Astrocyte of the cerebellum (primary cell): ENCODE measurements at regions of chr15 and their contacts with region 1.

Region 1: DNA sequence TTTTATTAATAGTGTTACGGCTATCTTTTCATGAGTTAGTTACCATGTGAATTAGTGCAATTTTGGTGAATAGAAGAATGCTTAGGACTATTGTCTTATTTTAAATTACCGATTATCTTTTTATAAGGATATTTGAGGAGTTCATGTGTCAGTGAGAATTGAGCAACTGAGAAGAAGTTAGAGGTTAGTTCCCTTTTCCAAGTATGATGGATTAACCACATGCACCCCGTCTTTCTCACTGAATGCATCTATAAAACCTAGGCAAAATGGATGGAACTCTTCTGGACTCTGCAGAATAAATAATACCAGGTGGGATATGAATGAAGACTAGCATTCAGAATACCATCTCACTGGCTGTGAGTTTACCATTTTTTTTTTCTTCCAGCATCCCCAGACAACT is 74.3 kb downstream of the TCF12 start:
- DNase-seq: no peak
- H3K4me3 ChIP-seq: no peak overlapping the region
- CTCF ChIP-seq: no peak

Region 2: DNA sequence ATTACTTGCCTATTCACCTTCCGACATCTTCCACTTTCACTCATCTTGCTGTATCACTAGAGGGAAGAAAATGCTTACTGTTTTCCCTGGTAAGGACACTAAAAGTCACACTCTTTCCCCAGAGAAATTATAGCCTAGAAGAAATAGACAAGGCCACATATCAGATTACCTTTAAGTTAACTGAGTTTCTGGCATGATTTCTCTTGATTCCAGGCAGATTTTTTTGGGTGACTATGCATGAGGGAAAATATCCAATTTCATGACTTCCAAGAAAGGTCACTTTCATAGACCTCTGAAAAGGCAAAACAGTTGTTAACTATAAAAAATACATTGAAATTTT is 44.0 kb before region 1 on chr15:
- in situ Hi-C with region 1: loop called (anchors 5 kb)
- DNase-seq: no peak
- H3K4me3 ChIP-seq: no peak overlapping the region
- CTCF ChIP-seq: no peak